PC-3 (cell line): ENCODE measurements at regions of chr3 and their contacts with region 1.

Region 1: DNA sequence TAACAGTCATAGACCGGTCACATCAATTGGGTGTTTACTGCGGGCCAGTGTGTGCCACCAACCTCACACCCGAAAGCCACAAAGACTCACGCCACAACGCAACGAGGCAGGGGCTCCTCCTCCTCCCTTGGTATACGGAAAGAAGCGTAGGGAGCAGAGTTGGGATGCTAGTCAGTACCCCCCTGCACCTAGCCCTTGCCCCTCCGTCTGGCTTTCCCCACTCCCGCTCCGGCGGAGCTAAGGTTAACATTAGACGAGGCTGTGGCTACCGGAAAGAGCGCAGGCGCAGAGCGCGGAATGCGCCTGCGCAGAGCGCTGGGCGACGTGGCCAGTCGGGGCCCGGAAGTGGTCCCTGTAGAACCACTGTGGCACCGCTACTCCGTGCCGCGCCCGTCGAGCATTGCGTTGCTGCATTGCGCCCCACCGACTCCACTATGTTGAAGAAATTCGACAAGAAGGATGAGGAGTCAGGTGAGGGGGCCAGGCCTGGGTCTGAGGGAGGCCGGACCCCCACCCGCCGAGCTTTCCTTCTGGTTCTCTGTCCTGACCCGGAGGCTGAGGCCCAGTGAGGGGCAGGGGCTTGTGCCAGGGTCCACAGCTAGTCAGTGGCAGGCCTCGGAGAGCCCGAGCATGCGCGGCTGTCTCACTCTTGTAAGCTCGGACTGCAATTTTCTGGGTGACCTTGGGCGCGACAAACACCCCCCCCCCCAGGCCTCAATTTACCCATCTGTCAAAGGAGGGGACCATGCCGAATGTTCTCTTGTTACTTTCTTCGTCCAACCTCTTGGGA is at the start of gene COPG1:
- DNase-seq: peak; percentile 87
- ATAC-seq: peak; percentile 74
- H3K4me3 ChIP-seq: peak within 1 kb of the TSS; percentile 87
- H3K27ac ChIP-seq: peak within 1 kb of the TSS; percentile 64
- H3K4me1 ChIP-seq: peaks cover 24% of the 10 kb centered on the region
- H3K27me3 ChIP-seq: no peaks in the 10 kb centered on the region
- CTCF ChIP-seq: no peak
- total RNA-seq, gene COPG1: 124 and 152 TPM in 2 replicates

Region 2: GRCh38 chr3:128969993-128970739 is 279.3 kb before region 1 on chr3:
- CTCF ChIA-PET with region 1: interaction called, 14 read pairs
- POLR2A ChIA-PET with region 1: interaction called, 17 read pairs
- intact Hi-C with region 1: loop called (anchors 2 kb)
- DNase-seq: peak; percentile 50
- ATAC-seq: no peak
- H3K4me3 ChIP-seq: no peak overlapping the region
- H3K27ac ChIP-seq: no peak overlapping the region
- H3K4me1 ChIP-seq: 0 out of 2 replicates have a peak, but pooled peaks cover 10% of the 10 kb centered on the region
- H3K27me3 ChIP-seq: no peaks in the 10 kb centered on the region
- CTCF ChIP-seq: peak; percentile 86

Region 3: GRCh38 chr3:129120254-129121004 is 129.0 kb before region 1 on chr3:
- CTCF ChIA-PET with region 1: no interaction called
- POLR2A ChIA-PET with region 1: interaction called, 3 read pairs
- intact Hi-C with region 1: loop called (anchors 2 kb)
- DNase-seq: peak; percentile 88
- ATAC-seq: peak; percentile 57
- H3K4me3 ChIP-seq: peak overlapping the region; percentile 75
- H3K27ac ChIP-seq: peak overlapping the region; percentile 83
- H3K4me1 ChIP-seq: peaks cover 16% of the 10 kb centered on the region
- H3K27me3 ChIP-seq: no peaks in the 10 kb centered on the region
- CTCF ChIP-seq: no peak

Region 4: DNA sequence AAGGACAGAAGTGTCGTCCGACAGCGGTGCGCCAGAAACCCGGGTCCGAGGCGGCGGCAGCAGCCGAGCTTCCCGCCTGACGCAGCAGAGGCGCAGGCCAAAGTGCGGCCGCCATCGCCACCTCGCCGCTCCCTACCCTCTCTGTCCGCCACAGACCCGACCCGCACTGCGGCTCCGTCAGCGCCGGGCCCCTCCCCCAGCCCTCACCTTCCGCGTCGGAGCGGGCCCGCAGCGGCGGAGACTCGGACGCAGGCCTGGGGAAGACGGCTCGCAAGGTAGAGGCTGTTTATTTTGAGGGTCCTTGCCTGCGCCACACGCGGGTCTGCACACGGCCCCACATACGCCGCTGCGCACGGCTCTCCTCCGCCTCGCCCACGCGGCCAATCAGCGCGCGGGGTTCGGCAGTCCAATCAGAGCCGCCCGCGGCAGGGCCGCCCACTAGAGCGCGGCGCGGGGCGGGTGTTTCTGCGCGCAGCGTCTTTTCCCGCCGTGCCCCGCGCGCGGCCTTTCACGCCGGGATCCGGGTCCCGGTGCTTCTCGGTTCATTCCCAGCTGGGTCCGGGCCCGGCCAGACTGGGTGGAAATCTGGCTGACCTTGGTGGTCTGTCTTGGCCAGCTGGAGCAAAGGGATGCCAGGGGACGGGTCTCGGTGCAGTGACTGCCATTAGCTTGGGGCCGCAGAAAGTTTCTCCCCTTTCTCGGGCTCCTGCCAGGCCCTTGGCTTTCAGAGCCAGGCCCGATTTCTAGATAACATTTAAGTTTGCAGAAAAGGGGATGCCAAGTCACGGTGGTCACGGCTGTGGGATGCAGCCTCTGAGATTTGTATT is 65.7 kb before region 1 on chr3 and contains the start of gene CNBP:
- CTCF ChIA-PET with region 1: interaction called, 4 read pairs
- POLR2A ChIA-PET with region 1: no interaction called
- intact Hi-C with region 1: loop called (anchors 1 kb)
- DNase-seq: peak; percentile 92
- ATAC-seq: peak; percentile 95
- H3K4me3 ChIP-seq: peak within 1 kb of the TSS; percentile 84
- H3K27ac ChIP-seq: peak within 1 kb of the TSS; percentile 90
- H3K4me1 ChIP-seq: peaks cover 30% of the 10 kb centered on the region
- H3K27me3 ChIP-seq: no peaks in the 10 kb centered on the region
- CTCF ChIP-seq: no peak
- total RNA-seq, gene CNBP: 220 and 267 TPM in 2 replicates

Region 5: DNA sequence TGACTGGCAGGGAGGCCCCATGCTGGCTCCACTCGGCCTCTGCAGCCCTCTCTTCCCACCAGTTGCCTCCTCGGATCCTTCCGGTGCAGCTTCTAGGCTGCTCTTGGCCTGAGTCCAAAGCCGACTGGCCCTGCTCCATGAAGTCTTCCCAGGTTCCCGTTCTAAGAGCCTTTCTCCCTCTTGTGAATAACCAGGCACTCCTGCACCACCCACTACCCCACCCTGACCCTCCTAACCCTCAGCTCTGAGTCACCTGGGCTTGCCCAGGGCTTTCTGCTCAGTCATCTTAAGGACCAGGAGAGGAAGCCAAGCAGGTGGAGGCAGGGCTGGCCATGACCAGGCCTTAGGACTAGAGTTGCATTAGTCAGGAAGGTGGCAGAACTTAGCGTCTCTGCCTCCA is 37.7 kb before region 1 on chr3:
- CTCF ChIA-PET with region 1: no interaction called
- POLR2A ChIA-PET with region 1: interaction called, 4 read pairs
- intact Hi-C with region 1: loop called (anchors 1 kb)
- DNase-seq: peak; percentile 96
- ATAC-seq: peak; percentile 100
- H3K4me3 ChIP-seq: no peak overlapping the region
- H3K27ac ChIP-seq: peak overlapping the region; percentile 85
- H3K4me1 ChIP-seq: peaks cover 16% of the 10 kb centered on the region
- H3K27me3 ChIP-seq: no peaks in the 10 kb centered on the region
- CTCF ChIP-seq: no peak